ENCODE measurements at regions of chr17 and their contacts with region 1.

Region 1: DNA sequence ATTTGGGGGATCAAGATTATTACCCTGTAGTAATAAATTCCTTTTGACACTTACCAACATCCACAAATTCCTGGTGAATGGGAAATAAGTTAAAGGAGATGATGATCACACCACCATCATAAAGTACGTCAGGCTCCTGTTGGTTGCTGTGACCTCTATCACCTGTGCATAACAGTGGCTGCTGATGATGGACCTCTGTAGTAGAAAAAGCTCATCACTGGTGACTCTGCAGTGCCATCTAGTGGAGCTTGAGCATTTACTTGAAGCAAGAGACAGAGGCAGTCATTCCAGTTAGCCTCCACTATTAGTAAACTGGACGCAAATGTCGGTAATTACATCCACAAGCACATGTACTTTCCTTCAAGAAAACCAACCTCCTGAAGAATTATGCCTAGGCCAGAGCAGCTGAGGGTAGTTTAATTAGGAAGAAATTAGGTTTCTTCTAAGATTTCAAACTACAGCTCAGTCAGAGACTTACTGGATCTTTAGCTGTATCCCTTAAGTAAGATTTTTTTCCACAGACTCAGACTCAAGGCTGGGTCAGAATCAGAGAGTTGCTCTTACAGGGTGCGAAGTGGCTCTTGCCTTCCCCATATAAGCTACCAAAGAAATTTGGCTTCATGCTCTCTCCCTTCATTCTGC is 39.3 kb downstream of the CYB561 start:
- DNase-seq: peak; percentile 62
- H3K4me3 ChIP-seq: no peak overlapping the region
- CTCF ChIP-seq: peak; percentile 81

Region 2: DNA sequence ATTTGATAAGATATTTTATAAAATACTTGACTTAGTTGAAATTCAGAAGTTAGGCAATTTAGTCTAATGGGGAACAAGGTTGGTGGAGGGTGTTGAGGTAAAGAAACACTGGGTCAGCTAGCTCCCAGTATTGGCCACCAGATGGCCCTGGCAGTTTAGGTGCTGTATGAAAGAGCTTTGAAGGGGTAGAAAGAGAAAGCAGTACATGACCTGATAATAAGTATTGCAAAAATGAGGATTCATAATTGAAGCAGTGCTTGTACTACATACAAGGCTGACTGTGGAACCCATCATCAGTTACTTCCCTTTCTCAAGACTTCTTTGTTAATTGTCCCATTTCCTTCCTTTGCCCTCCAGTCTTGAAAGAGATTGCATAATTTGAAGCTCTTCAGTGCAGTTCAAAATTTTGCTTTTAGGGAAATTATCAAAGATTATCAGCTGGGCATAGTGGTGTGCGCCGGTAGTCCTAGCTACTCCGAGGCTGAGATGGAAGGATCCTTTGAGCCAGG is 411.4 kb before region 1 on chr17:
- CTCF ChIA-PET with region 1: interaction called, 20 read pairs
- POLR2A ChIA-PET with region 1: no interaction called
- DNase-seq: no peak
- H3K4me3 ChIP-seq: no peak overlapping the region
- CTCF ChIP-seq: peak; percentile 56

Region 3: DNA sequence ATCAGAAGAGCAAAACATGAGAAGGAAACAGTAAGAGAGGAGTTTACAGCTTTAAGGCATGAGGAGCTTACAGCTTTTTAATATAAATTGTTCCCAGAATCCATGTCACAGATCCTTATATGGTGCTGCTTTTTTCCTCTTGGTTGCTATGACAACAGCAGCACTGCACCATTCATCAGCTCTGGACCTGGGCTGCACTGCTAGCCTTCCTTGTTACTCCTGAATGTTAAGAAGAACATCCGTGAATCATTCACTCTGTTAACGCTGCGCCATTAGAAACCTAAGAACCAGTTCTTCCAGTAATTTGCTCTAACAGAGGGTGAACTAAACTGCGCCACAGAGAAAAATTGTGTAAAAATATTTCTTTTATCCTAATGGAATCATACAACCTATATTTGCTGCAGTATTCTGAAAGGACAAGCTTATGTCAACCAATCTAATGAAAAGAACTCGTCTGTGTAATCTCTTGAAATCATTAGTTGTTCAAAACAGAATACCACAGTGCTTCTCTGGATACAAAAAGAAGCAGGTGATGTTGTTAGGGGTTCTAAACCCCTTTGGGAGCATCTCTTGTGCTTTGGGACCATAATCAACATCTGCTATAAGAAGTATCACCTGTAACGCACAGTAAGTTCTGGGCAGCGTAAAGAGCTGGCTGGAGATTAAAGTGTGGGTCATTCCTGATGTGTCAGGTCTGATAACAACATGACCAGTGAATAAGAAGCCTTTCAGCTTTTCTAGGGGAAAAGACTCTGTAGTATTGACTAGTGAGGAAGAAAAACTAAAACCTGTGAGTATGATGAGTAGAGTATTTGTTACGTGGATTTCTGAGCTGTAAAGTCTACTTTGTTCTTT is 289.6 kb before region 1 on chr17:
- CTCF ChIA-PET with region 1: interaction called, 14 read pairs
- POLR2A ChIA-PET with region 1: no interaction called
- DNase-seq: no peak
- H3K4me3 ChIP-seq: no peak overlapping the region
- CTCF ChIP-seq: no peak

Region 4: GRCh38 chr17:63381101-63381729 is 25.6 kb before region 1 on chr17:
- CTCF ChIA-PET with region 1: interaction called, 18 read pairs
- POLR2A ChIA-PET with region 1: no interaction called
- DNase-seq: no peak
- H3K4me3 ChIP-seq: no peak overlapping the region
- CTCF ChIP-seq: no peak

Region 5: GRCh38 chr17:63419949-63420867 is 13.4 kb after region 1 on chr17:
- CTCF ChIA-PET with region 1: interaction called, 20 read pairs
- POLR2A ChIA-PET with region 1: no interaction called
- DNase-seq: no peak
- H3K4me3 ChIP-seq: no peak overlapping the region
- CTCF ChIP-seq: no peak

Measured in AG04449 (cell line).